A549 (cell line): ENCODE measurements at regions of chr20 and their contacts with region 1.

Region 1: DNA sequence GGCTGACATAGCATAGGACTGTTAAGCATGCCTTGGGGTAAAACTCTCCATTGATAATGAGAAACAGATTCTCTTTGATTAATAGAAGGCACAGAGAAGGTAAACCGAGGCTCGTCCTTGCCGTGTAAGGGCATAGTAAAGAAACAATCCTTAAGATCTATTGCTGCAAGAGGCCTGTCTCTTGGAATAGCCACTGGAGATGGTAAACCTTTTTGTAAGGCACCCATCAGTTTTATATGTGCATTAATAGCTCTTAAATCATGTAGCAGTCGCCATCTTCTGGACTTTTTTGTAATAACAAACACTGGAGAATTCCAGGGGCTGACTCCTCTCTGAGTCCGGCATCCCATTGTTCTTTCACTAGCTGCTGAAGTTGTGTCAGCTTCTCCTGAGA is 8.4 kb upstream of the ABHD12 start:
- DNase-seq: peak; percentile 77 to 81
- ATAC-seq: peak; percentile 99
- H3K4me3 ChIP-seq: no peak overlapping the region
- H3K27ac ChIP-seq: peak overlapping the region; percentile 46; a peak in 5 of 6 replicates
- H3K4me1 ChIP-seq: peaks cover 18% of the 10 kb centered on the region
- CTCF ChIP-seq: peak; percentile 90
- EP300 ChIP-seq: no peak
- POLR2A ChIP-seq: no peak
- RAD21 ChIP-seq: peak; percentile 94 to 95

Region 2: DNA sequence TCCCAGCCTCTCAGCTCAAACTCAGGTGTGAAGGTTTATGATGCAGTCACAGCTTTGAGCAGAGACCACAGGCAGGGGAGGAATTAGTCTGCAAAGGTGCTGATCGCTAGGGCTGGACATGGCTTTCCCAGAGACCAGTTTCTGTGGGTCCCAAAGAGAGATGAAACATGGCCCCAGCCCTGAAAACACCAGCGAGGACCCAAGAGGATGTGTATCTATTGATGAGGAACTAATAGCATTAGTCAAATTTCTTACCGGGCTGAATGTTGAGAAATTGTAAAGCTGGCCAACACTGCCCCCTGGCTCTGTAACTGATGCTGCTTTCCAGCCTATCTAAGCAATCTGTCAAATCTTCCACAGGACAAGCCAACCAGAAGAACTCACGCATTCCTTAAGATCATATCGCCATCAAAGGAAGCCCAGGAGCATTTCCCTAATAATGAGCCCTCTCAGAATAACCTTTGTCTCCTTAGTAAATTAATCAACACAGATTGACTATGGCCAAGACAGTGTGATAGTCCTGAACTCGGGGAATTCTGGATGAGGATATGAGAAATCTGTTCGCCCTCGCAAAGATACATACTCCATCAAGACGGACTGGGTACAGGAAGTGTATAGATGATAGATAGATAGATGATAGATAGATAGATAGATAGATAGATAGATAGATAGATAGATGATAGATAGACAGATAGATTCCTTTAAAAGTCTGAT is 333.3 kb before region 1 on chr20:
- CTCF ChIA-PET with region 1: interaction called, 11 read pairs
- POLR2A ChIA-PET with region 1: no interaction called
- DNase-seq: peak; percentile 71 to 76
- ATAC-seq: peak; percentile 84 to 90
- H3K4me3 ChIP-seq: no peak overlapping the region
- H3K27ac ChIP-seq: no peak overlapping the region
- H3K4me1 ChIP-seq: peaks cover 13% of the 10 kb centered on the region; the same call in 2 of the 3 replicates
- CTCF ChIP-seq: peak; percentile 82
- EP300 ChIP-seq: no peak
- POLR2A ChIP-seq: no peak
- RAD21 ChIP-seq: peak; percentile 88 to 90

Region 3: GRCh38 chr20:25281541-25281991 is 117.5 kb before region 1 on chr20:
- CTCF ChIA-PET with region 1: interaction called, 24 read pairs
- POLR2A ChIA-PET with region 1: no interaction called
- DNase-seq: no peak
- ATAC-seq: no peak
- H3K4me3 ChIP-seq: no peak overlapping the region
- H3K27ac ChIP-seq: no peak overlapping the region
- H3K4me1 ChIP-seq: no peaks in the 10 kb centered on the region; the same call in 2 of the 3 replicates
- CTCF ChIP-seq: no peak
- EP300 ChIP-seq: no peak
- POLR2A ChIP-seq: no peak
- RAD21 ChIP-seq: no peak

Region 4: GRCh38 chr20:25288266-25289181 is 110.5 kb before region 1 on chr20:
- CTCF ChIA-PET with region 1: interaction called, 135 read pairs
- POLR2A ChIA-PET with region 1: interaction called, 4 read pairs
- DNase-seq: no peak
- ATAC-seq: no peak
- H3K4me3 ChIP-seq: no peak overlapping the region
- H3K27ac ChIP-seq: no peak overlapping the region
- H3K4me1 ChIP-seq: no peaks in the 10 kb centered on the region
- CTCF ChIP-seq: no peak
- EP300 ChIP-seq: no peak
- POLR2A ChIP-seq: no peak
- RAD21 ChIP-seq: no peak

Region 5: GRCh38 chr20:25310268-25310920 is 88.6 kb before region 1 on chr20:
- CTCF ChIA-PET with region 1: interaction called, 91 read pairs
- POLR2A ChIA-PET with region 1: interaction called, 9 read pairs
- DNase-seq: peak; percentile 95 to 97
- ATAC-seq: peak; percentile 75 to 87
- H3K4me3 ChIP-seq: peak overlapping the region; percentile 26
- H3K27ac ChIP-seq: peak overlapping the region; percentile 97 to 98
- H3K4me1 ChIP-seq: peaks cover 71% of the 10 kb centered on the region
- CTCF ChIP-seq: peak; percentile 67
- EP300 ChIP-seq: peak; percentile 70 to 78; a peak in 2 of 5 replicates
- POLR2A ChIP-seq: no peak
- RAD21 ChIP-seq: peak; percentile 81 to 83

Region 6: DNA sequence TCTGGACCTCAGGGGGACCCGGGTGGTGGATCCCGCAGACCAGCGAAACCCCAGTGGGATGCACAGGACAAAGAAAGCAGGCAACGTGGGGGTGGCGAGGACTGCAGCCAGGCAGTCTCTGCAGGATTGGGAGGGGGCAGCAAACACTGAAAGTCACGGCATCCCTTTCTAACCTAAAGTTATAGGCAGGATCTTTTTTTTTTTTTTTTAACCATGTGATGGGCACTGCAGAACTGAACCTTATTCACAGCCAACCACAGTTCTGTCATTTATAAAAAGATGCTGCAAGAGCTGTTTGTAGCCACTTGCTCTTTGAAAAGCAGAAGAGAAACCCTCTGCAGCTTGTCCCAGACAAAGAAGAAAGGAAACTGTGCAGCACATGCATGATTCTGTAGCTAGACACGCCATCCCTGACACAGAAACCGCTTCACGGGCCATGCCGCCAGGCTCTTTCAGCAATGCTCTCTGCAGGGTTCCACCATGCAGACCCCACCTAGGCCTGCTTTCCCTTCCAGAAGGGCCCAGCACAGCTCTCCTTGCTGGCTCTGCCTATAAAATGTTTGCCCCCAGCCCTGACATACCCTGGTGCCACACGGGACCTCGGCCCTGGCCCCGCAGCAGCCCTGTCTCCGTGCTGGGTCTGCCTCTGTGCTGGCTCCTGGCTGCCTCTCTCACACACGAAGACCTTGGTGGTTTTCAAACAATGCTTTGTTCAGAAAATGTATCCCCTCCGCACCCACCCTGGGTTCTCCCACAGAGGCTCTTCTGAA is 80.4 kb before region 1 on chr20:
- CTCF ChIA-PET with region 1: interaction called, 91 read pairs
- POLR2A ChIA-PET with region 1: interaction called, 4 read pairs
- DNase-seq: no peak
- ATAC-seq: no peak
- H3K4me3 ChIP-seq: no peak overlapping the region
- H3K27ac ChIP-seq: peak overlapping the region in 1 of 2 experiments; percentile 9; a peak in 1 of 6 replicates
- H3K4me1 ChIP-seq: peaks cover 27% of the 10 kb centered on the region
- CTCF ChIP-seq: no peak
- EP300 ChIP-seq: no peak
- POLR2A ChIP-seq: no peak
- RAD21 ChIP-seq: no peak

Region 7: DNA sequence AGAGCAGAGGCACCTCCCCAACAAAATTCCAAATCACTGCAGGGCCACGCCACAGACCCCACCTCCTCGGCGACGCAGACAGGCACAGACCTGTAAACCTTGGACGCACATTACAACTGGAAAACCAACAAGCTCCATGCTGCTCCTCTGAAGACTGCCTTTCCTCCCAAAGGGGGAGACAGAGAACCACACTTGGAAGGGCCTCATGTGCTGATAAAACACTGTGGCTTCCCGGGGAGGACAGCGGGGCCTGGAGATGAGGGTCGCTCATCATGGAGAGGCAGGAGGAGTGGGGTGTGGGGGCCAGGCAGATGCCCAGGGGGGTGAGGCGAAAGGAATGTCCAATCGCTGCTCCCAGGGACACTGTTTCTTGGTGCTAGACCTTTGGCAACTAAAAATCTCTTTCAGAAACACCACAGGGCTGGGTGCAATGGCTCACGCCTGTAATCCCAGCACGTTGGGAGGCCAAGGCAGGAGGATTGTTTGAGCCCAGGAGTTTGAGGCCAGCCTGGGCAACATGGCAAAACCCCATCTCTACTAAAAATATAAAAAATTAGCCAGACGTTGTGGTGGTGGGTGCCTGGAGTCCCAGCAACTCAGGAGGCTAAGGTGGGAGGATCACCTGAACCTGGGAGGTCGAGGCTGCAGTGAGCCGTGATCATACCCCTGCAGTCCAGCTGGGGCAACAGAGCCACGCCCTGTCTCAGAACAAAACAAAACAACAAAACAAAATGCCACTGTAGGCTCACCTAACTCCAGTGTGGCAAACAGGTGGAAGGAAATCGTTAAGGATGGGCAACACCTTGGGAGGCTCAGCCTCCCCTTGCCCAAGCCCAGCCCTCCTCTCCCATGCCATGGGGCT is 62.2 kb before region 1 on chr20:
- CTCF ChIA-PET with region 1: interaction called, 45 read pairs
- POLR2A ChIA-PET with region 1: no interaction called
- DNase-seq: peak; percentile 33 to 71
- ATAC-seq: peak; percentile 94
- H3K4me3 ChIP-seq: no peak overlapping the region
- H3K27ac ChIP-seq: peak overlapping the region in 1 of 2 experiments; percentile 50; a peak in 2 of 6 replicates
- H3K4me1 ChIP-seq: peaks cover 24% of the 10 kb centered on the region; the same call in 2 of the 3 replicates
- CTCF ChIP-seq: peak; percentile 30
- EP300 ChIP-seq: no peak
- POLR2A ChIP-seq: no peak
- RAD21 ChIP-seq: peak; percentile 54 to 73

Region 8: DNA sequence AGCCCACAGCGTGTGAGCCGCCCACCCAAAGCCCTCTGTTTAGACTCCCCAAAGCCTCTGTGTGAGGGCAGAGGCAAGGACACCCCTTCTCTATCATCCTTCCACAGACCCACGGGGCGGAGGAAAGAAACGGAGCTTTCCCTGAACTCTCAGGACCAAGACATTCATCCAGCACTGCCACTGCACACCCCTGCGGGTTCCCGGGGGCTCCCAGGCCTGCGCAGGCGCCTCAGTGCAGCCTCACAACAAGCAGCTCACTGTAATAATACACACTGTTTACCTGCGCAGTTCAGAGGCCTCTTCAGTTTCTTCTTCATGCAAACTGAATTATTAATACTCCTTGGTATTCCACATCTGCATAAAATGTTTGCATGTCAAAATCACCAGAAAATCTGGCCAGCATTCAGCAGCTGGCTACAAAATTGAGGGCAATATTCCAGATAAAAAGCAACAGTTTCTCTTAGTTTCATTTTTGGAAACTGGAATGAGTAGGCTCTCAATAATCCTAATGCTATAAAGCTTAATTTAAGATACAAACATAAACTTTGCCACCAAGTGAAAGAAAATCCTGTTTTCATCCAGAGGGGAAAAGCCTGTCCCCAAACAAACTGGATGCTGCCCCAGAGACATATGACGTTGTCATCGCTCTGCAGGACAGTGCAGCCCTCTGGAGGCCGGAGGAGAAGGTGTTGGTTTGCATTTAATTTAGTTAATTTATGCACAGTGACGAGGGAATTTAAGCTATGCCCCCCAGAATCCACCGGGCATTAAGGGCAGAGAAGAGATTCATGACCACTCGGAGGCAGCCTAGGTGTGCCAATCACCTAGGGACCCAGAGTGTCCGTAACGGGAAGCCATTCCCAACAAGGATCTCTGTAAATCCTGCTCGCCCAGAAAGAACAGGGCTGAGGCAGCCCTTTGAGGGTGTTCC is 141.0 kb after region 1 on chr20:
- CTCF ChIA-PET with region 1: no interaction called
- POLR2A ChIA-PET with region 1: no interaction called
- DNase-seq: no peak
- ATAC-seq: peak in 1 of 2 experiments; percentile 35; a peak in 3 of 6 replicates
- H3K4me3 ChIP-seq: no peak overlapping the region
- H3K27ac ChIP-seq: peak overlapping the region; percentile 39 to 67; a peak in 4 of 6 replicates
- H3K4me1 ChIP-seq: peaks cover 50% of the 10 kb centered on the region
- CTCF ChIP-seq: no peak
- EP300 ChIP-seq: no peak
- POLR2A ChIP-seq: no peak
- RAD21 ChIP-seq: peak; percentile 38; a peak in 2 of 5 replicates